T-cell (primary cell): ENCODE measurements at regions of chr12 and their contacts with region 1.

Region 1: GRCh38 chr12:49130151-49131050 is 794 bp downstream of the TUBA1B start:
- DNase-seq: peak; percentile 80 to 96 (median 90)
- ATAC-seq: peak; percentile 62 to 72 (median 67)
- H3K4me3 ChIP-seq: peak overlapping the region; percentile 94 to 100
- H3K4me3 Mint-ChIP-seq: peak overlapping the region; percentile 96 to 97 (median 97)
- H3K27ac ChIP-seq: peak overlapping the region; percentile 92
- H3K27ac Mint-ChIP-seq: peak overlapping the region; percentile 97 to 99
- H3K4me1 ChIP-seq: peaks cover 18% of the 10 kb centered on the region in 2 experiments
- H3K4me1 Mint-ChIP-seq: peaks cover 45 to 52% (median 50%) of the 10 kb centered on the region in 3 donors
- H3K27me3 ChIP-seq: no peaks in the 10 kb centered on the region
- H3K27me3 Mint-ChIP-seq: no peaks in the 10 kb centered on the region

Region 2: DNA sequence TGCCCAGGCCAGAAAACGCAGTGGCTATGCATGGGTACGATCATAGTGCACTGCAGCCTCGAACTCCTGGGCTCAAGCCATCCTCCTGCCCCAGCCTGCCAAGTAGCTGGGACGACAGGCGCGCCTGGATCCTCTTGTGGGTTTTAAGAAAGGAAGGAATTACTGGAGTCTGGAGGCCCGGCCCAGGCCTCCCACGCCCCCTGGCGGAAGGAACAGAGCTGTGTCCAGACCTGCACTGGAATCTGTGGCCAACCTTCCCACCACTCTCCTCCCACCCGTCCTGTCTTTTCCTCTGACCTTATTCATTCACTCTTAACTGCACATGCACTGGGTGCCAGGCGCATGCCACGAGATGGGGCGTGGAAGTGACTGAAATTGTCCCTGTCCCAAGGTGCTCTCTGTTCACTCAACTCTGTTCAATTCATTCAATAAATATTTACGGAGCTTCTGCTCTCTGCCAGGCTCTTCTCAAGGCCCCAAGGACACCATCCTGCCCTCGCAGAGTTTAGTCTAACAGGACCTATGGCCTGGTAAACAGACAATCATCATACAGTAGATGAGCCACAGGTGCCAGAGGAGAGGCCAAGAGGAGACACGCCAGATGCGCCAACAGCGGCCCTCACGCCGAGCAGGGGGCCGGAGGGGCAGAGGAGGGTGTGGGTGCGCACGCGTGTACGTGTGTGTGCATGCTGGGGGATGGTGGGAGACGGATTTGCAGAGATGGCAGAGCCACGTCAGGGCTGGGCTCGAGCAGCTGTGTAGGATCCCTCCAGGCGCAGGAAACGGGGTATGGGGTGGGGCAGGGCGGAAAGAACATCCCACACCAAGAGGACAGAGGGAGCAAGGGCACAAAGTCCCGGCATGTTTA is 1180.7 kb before region 1 on chr12:
- CTCF ChIA-PET with region 1: no interaction called
- POLR2A ChIA-PET with region 1: no interaction called
- DNase-seq: peak in 26 of 35 experiments; percentile 8 to 63 (median 32)
- ATAC-seq: peak in 3 of 4 experiments; percentile 47 to 75 (median 50)
- H3K4me3 ChIP-seq: no peak overlapping the region
- H3K4me3 Mint-ChIP-seq: no peak overlapping the region
- H3K27ac ChIP-seq: no peak overlapping the region
- H3K27ac Mint-ChIP-seq: peak overlapping the region in 1 of 2 donors; percentile 49
- H3K4me1 ChIP-seq: no peaks in the 10 kb centered on the region
- H3K4me1 Mint-ChIP-seq: peaks cover 0 to 1% (median 0%) of the 10 kb centered on the region in 3 donors
- H3K27me3 ChIP-seq: peaks cover 0 to 34% of the 10 kb centered on the region in 2 experiments
- H3K27me3 Mint-ChIP-seq: peaks cover 8 to 11% of the 10 kb centered on the region in 2 donors

Region 3: GRCh38 chr12:49069507-49070346 is 60.7 kb before region 1 on chr12 and contains the start of gene RHEBL1:
- CTCF ChIA-PET with region 1: interaction called, 4 to 12 read pairs
- POLR2A ChIA-PET with region 1: interaction called, 3 to 4 read pairs
- DNase-seq: peak; percentile 94 to 99 (median 96)
- ATAC-seq: peak; percentile 99 to 100 (median 100)
- H3K4me3 ChIP-seq: peak within 1 kb of the TSS; percentile 85 to 91
- H3K4me3 Mint-ChIP-seq: peak within 1 kb of the TSS; percentile 86 to 100 (median 99)
- H3K27ac ChIP-seq: peak within 1 kb of the TSS; percentile 68
- H3K27ac Mint-ChIP-seq: peak within 1 kb of the TSS; percentile 87 to 96
- H3K4me1 ChIP-seq: peaks cover 6 to 17% of the 10 kb centered on the region in 2 experiments
- H3K4me1 Mint-ChIP-seq: peaks cover 18 to 19% (median 19%) of the 10 kb centered on the region in 3 donors
- H3K27me3 ChIP-seq: no peaks in the 10 kb centered on the region
- H3K27me3 Mint-ChIP-seq: no peaks in the 10 kb centered on the region
- total RNA-seq, gene RHEBL1: 2.3 to 5.3 (median 2.5) TPM

Region 4: DNA sequence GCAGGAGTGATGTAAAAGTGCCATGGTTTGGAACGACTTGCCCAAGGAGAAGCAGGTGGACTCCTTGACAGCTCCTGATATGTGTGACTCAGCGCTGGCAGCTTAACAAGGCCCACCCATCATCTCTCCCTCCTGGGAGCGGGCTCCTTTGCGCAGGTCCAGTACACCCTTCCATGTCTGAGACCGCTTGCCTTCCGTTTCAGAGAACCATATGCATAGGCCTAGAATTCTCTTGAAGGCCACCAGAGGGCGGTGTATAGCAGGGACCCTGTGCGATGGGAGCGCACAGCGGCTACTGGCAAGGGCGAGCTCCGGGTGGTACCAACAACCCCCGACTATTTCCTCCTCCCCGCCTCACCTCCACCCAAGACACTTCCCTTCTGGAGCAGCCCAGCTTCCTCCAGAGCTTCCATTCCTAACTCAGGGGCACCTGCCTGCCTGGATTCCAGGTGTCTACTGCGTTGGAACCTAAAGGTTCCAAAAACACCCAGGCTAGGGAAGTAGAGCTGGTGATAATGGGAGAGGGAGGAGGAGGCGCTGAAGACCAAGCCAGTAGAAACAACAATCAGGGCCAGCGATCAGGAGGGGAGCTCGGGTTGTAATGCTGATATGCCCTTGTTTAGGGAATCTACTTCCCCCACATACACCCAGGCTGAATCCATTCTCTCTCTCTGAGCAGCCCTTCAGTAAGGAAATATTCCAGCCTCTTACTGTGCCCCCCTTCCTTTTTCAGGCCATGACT is 42.0 kb before region 1 on chr12:
- CTCF ChIA-PET with region 1: interaction called, 11 to 25 read pairs
- POLR2A ChIA-PET with region 1: no interaction called
- DNase-seq: peak in 33 of 35 experiments; percentile 35 to 89 (median 58)
- ATAC-seq: peak; percentile 77 to 89 (median 86)
- H3K4me3 ChIP-seq: no peak overlapping the region
- H3K4me3 Mint-ChIP-seq: peak overlapping the region in 1 of 3 donors; percentile 80
- H3K27ac ChIP-seq: no peak overlapping the region
- H3K27ac Mint-ChIP-seq: no peak overlapping the region
- H3K4me1 ChIP-seq: peaks cover 8 to 49% of the 10 kb centered on the region in 2 experiments
- H3K4me1 Mint-ChIP-seq: peaks cover 33 to 52% (median 40%) of the 10 kb centered on the region in 3 donors
- H3K27me3 ChIP-seq: peaks cover 12 to 53% of the 10 kb centered on the region in 2 experiments
- H3K27me3 Mint-ChIP-seq: peaks cover 28 to 45% of the 10 kb centered on the region in 2 donors

Region 5: GRCh38 chr12:49098035-49098451 is 32.4 kb before region 1 on chr12:
- CTCF ChIA-PET with region 1: interaction called, 3 to 11 read pairs
- POLR2A ChIA-PET with region 1: interaction called in 1 of 2 experiments, 3 read pairs
- DNase-seq: peak in 31 of 35 experiments; percentile 16 to 78 (median 54)
- ATAC-seq: peak; percentile 54 to 68 (median 62)
- H3K4me3 ChIP-seq: no peak overlapping the region
- H3K4me3 Mint-ChIP-seq: no peak overlapping the region
- H3K27ac ChIP-seq: no peak overlapping the region
- H3K27ac Mint-ChIP-seq: no peak overlapping the region
- H3K4me1 ChIP-seq: peaks cover 0 to 14% of the 10 kb centered on the region in 2 experiments
- H3K4me1 Mint-ChIP-seq: peaks cover 8 to 23% (median 14%) of the 10 kb centered on the region in 3 donors
- H3K27me3 ChIP-seq: peaks cover 0 to 20% of the 10 kb centered on the region in 2 experiments
- H3K27me3 Mint-ChIP-seq: peaks cover 17 to 22% of the 10 kb centered on the region in 2 donors

Region 6: DNA sequence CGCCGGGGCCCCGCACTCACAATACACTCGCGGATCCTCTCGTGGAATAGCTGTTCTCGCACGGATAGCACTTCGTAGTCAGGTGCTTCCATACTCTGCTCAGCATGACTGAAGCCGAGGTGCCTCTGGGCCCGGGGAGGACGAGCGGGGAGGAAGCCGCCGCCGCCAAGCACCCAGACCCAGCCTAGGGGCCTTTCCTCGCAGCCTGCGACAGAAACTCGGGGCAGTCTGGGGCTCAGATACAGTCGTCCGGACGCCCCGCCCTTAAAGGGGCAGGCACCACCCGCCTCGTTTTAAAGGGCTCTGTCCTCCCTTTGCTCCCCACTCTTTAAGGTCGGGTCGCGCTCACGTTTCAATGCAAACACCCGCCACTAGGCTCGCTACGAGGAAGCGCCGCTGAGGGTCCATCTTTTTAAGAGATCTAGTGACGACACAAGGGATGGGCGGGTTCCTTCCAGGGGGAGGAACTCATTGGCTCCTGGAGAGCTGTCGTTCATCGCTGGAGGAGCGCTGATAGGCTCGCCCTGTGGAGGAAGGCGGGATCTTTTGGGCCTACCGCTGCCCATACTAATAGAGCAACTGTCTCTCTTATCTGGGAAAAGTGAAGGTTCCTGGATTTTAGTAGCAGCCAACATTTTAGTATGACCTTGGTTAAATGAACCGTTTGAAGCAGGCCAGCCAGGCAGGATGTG is 19.8 kb before region 1 on chr12 and contains the start of gene LMBR1L:
- CTCF ChIA-PET with region 1: interaction called, 9 to 54 read pairs
- POLR2A ChIA-PET with region 1: interaction called, 8 to 14 read pairs
- DNase-seq: peak; percentile 88 to 99 (median 97)
- ATAC-seq: peak; percentile 94 to 97 (median 96)
- H3K4me3 ChIP-seq: peak within 1 kb of the TSS; percentile 82 to 96
- H3K4me3 Mint-ChIP-seq: peak within 1 kb of the TSS; percentile 99
- H3K27ac ChIP-seq: peak within 1 kb of the TSS; percentile 90
- H3K27ac Mint-ChIP-seq: peak within 1 kb of the TSS; percentile 99
- H3K4me1 ChIP-seq: peaks cover 8 to 37% of the 10 kb centered on the region in 2 experiments
- H3K4me1 Mint-ChIP-seq: peaks cover 41 to 48% (median 46%) of the 10 kb centered on the region in 3 donors
- H3K27me3 ChIP-seq: peaks cover 0 to 2% of the 10 kb centered on the region in 2 experiments
- H3K27me3 Mint-ChIP-seq: no peaks in the 10 kb centered on the region
- total RNA-seq, gene LMBR1L: 159 to 302 (median 224) TPM

Region 7: DNA sequence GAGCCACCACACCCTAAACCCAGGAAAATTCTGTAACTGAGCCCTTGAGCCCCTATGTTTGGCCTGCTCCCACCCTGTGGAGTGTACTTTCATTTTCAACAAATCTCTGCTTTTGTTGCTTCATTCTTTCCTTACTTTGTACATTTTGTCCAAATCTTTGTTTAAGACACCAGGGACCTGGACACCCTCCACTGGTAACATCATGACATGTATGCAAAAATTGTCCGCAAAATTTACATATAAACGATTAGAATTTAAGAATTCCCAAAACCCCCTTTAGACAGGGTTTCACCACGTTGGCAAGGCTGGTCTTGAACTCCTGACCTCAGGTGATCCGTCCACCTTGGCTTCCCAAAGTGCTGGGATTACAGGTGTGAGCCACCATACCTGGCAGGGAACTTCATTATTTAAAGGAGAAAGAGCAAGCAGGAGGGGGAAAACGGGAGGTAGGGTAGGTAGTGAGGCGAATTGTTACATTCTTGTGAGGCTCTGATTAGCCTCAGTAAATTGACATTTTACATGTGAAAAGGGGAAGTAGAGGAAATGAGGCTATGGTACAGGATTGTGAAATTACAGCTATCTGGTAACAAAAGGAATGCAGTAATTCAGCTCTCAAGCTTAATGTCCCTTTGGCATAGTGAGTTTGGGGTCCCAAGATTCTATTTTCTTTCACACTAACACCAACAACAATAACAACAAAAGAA is 30.8 kb after region 1 on chr12:
- CTCF ChIA-PET with region 1: no interaction called
- POLR2A ChIA-PET with region 1: no interaction called
- DNase-seq: no peak
- ATAC-seq: no peak
- H3K4me3 ChIP-seq: no peak overlapping the region
- H3K4me3 Mint-ChIP-seq: no peak overlapping the region
- H3K27ac ChIP-seq: no peak overlapping the region
- H3K27ac Mint-ChIP-seq: no peak overlapping the region
- H3K4me1 ChIP-seq: no peaks in the 10 kb centered on the region
- H3K4me1 Mint-ChIP-seq: peaks cover 0 to 2% (median 0%) of the 10 kb centered on the region in 3 donors
- H3K27me3 ChIP-seq: no peaks in the 10 kb centered on the region
- H3K27me3 Mint-ChIP-seq: no peaks in the 10 kb centered on the region

Region 8: DNA sequence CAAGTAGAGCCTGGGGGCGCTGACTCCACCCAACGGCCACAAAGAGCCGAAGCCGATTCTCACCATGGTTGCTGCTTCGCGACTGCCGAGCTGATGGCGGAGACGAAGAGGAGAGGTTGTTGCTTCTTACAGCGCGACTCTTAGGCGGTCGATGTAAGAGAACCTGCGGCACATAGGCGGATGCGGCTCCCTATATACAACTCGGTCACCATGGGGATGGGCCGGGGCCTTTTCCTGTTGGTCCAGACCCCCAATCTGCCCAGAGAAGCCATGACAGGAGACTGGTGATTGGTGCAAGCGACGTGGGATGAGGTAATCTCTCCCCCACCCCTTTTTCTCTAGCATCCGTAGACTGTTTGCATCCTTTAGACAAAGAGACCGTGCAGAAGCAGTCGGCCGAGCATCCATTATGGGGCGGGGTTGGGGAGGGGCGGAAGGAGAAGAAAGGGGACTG is 58.5 kb after region 1 on chr12 and contains the start of gene TUBA1A:
- CTCF ChIA-PET with region 1: interaction called, 3 to 18 read pairs
- POLR2A ChIA-PET with region 1: interaction called, 5 to 61 read pairs
- DNase-seq: peak; percentile 86 to 99 (median 97)
- ATAC-seq: peak; percentile 87 to 91 (median 90)
- H3K4me3 ChIP-seq: peak within 1 kb of the TSS; percentile 84 to 95
- H3K4me3 Mint-ChIP-seq: peak within 1 kb of the TSS; percentile 94 to 98 (median 98)
- H3K27ac ChIP-seq: peak within 1 kb of the TSS; percentile 98
- H3K27ac Mint-ChIP-seq: peak within 1 kb of the TSS; percentile 99
- H3K4me1 ChIP-seq: peaks cover 6 to 13% of the 10 kb centered on the region in 2 experiments
- H3K4me1 Mint-ChIP-seq: peaks cover 26 to 29% (median 27%) of the 10 kb centered on the region in 3 donors
- H3K27me3 ChIP-seq: no peaks in the 10 kb centered on the region
- H3K27me3 Mint-ChIP-seq: no peaks in the 10 kb centered on the region
- total RNA-seq, gene TUBA1A: 89.3 to 310 (median 100) TPM

Region 9: GRCh38 chr12:49219417-49220026 is 89.1 kb after region 1 on chr12:
- CTCF ChIA-PET with region 1: no interaction called
- POLR2A ChIA-PET with region 1: interaction called in 1 of 2 experiments, 12 read pairs
- DNase-seq: no peak
- ATAC-seq: no peak
- H3K4me3 ChIP-seq: no peak overlapping the region
- H3K4me3 Mint-ChIP-seq: no peak overlapping the region
- H3K27ac ChIP-seq: no peak overlapping the region
- H3K27ac Mint-ChIP-seq: no peak overlapping the region
- H3K4me1 ChIP-seq: no peaks in the 10 kb centered on the region
- H3K4me1 Mint-ChIP-seq: no peaks in the 10 kb centered on the region
- H3K27me3 ChIP-seq: peaks cover 0 to 2% of the 10 kb centered on the region in 2 experiments
- H3K27me3 Mint-ChIP-seq: peaks cover 0 to 5% of the 10 kb centered on the region in 2 donors